ENCODE measurements at regions of chr6 and their contacts with region 1.

Region 1: GRCh38 chr6:106556368-106556960 is 72.8 kb downstream of the RTN4IP1 start:
- DNase-seq: peak; percentile 48

Region 2: DNA sequence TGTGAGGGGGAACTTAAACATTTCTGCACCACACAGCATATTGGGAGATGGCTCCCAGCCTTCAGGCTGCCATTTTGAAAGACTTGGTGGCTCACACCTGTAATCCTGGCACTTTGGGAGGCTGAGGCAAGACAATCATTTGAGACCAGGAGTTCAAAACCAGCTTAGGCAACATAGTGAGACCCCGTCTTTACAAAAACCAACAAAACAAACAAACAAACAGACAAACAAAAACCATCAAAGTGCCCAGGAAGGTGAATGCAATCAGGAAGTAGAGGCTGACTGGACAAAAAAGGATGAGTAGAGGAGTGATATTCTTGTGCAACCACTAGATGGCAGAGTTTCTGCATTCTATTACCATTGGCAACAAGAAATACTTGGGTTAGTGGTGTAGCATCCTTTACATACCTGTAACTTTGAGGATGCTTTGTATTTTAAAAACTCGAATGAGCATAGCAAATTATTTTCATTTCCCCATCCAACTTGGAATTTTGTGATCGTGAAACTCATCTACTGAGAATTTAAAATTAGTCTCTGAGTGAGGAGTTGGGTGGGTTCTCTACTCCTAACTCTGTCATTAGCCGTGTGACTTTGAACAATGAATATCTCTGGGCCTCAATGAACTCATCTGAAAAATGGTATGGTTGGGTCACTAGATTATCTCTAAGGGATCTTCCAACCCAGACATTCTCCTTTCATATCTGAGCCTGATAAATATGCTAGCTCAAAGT is 111.5 kb before region 1 on chr6:
- in situ Hi-C with region 1: loop called (anchors 10 kb)
- DNase-seq: peak; percentile 76

Region 3: DNA sequence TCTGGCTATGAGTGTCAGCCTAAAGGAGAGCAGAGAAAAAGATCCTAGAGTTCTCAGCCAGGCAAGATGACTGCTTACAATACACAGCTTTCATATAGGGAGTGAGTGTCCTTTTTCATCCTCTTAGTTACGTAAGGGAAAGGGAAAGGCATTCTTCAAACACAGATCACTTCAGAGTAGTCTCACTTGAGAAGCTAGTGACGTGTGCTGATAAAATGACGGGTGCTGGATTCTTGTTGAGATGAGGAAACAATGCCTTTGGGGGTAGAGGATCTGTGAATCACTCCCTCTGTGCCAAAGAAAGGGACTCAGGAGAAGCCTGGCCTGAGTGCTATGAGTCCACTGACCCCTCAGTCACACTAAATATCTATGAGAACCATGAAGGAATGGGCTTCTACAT is 190.2 kb after region 1 on chr6:
- in situ Hi-C with region 1: no loop called
- DNase-seq: peak; percentile 95